Activated CD4-positive, alpha-beta memory T cell treated with anti-CD3 and anti-CD28 coated beads for 36 hours (primary cell): ENCODE measurements at regions of chr3 and their contacts with region 1.

Region 1: GRCh38 chr3:33113772-33114621 is at the start of gene CRTAP:
- DNase-seq: peak; percentile 91
- H3K4me3 Mint-ChIP-seq: peak within 1 kb of the TSS; percentile 80
- H3K27ac Mint-ChIP-seq: peak within 1 kb of the TSS; percentile 73
- H3K4me1 Mint-ChIP-seq: peaks cover 59% of the 10 kb centered on the region
- H3K27me3 Mint-ChIP-seq: no peaks in the 10 kb centered on the region
- total RNA-seq, gene CRTAP: 57.6 to 60.0 TPM

Region 2: DNA sequence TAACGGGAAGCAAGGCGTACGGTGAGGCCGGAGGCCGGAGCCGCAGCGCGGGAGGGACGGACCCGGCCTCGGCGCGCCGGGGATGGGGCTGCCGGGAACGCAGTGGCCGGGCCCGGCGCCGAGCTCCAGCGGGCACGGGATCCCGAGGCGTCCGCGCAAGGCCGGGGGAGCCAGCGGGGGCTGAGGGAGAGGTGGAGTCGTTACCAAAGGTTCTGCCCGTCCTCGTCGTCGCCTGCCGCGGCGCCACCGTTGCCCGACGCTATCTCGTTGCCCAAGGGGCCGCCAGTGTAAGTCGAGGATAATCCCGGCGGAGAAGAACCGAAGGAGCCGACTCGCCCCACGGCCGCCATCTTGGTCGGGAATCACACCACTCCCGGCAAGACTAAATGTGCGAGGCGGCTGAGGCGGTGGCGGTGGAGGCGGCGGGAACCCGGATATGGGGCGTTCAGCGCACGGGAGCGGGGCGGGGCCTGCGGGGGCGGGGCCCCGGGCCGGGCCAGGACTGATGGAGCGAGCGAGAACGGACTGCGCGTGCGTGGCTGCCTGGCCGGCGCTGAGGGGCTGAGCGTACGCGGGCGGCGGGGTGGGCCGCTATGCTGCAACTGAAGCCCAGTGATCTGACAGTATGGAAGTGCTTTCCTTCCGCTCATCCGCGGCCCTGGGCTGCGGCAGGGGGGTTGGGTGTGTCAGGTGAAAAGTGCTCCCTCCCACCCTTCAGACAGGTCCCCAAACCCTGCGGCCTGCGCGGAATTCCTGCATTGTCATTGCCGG is 543.4 kb before region 1 on chr3 and contains the start of gene DYNC1LI1:
- CTCF ChIA-PET with region 1: no interaction called
- POLR2A ChIA-PET with region 1: no interaction called
- intact Hi-C with region 1: loop called (anchors 2 kb)
- DNase-seq: peak; percentile 96
- H3K4me3 Mint-ChIP-seq: peak within 1 kb of the TSS; percentile 89
- H3K27ac Mint-ChIP-seq: peak within 1 kb of the TSS; percentile 90
- H3K4me1 Mint-ChIP-seq: peaks cover 27% of the 10 kb centered on the region
- H3K27me3 Mint-ChIP-seq: no peaks in the 10 kb centered on the region
- total RNA-seq, gene DYNC1LI1: 35.2 to 36.3 TPM

Region 3: DNA sequence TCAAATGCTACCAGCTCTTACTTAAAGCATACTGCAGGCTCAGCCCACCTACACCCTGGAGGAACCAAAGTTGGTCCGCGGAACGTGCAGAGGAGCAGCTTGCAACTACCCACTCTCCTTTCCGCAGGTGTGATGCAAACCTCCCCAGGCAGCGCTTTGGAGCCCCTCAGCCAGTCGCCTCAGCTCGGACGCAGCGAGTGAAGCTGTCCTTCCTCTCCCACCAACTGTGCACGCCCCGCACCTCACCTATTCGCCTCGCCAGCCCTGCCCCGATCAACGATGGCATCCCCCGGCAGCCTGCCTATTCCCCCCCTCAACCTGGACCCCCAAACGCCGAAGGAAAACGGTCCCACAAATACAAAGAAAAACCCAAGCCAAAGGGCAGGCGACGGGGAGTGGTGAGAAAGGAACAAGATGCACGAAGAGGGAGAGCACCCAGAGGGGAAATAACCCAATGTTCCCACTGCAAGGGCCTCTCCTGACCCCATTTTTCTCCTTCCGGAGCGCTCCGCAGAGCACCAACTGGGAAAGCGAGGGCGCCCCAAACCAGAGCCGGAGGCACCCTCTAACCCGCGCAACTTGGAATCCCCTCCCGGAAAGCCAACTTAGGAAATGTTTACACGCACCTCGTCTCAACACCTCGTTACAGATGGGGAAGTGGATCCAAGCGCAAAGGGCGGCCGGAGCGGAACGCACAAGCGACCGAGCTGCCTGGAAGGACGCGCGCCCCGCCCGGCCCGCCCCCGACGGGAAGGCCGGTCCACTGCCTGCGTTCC is 17.7 kb before region 1 on chr3:
- CTCF ChIA-PET with region 1: interaction called, 3 read pairs
- POLR2A ChIA-PET with region 1: interaction called, 8 read pairs
- intact Hi-C with region 1: loop called (anchors 1 kb)
- DNase-seq: peak; percentile 60
- H3K4me3 Mint-ChIP-seq: peak overlapping the region; percentile 97
- H3K27ac Mint-ChIP-seq: peak overlapping the region; percentile 85
- H3K4me1 Mint-ChIP-seq: peaks cover 43% of the 10 kb centered on the region
- H3K27me3 Mint-ChIP-seq: no peaks in the 10 kb centered on the region

Region 4: DNA sequence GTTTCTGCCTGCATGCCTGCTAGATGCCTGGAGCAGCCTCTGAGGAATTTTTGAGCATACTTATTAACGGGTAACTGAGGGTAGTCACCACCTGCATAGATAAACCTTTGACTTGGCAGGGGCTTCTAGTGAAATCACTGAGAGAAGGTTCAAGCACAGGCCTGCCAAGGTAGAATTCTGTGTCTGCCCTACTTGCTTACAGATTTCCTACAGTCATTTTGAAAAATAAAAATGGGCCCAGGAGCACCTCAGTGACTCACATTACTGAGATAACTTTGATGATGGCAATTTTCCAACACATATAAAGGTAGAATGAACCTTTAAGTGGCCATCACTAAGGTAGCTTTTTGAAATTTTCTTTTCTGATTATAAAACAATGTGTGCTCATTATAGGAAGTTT is 10.6 kb after region 1 on chr3:
- CTCF ChIA-PET with region 1: interaction called, 4 read pairs
- POLR2A ChIA-PET with region 1: no interaction called
- intact Hi-C with region 1: loop called (anchors 1 kb)
- DNase-seq: peak; percentile 14
- H3K4me3 Mint-ChIP-seq: no peak overlapping the region
- H3K27ac Mint-ChIP-seq: peak overlapping the region; percentile 44
- H3K4me1 Mint-ChIP-seq: peaks cover 16% of the 10 kb centered on the region
- H3K27me3 Mint-ChIP-seq: no peaks in the 10 kb centered on the region

Region 5: GRCh38 chr3:33131331-33132018 is 17.5 kb after region 1 on chr3:
- CTCF ChIA-PET with region 1: interaction called, 53 read pairs
- POLR2A ChIA-PET with region 1: no interaction called
- intact Hi-C with region 1: no loop called
- DNase-seq: peak; percentile 32
- H3K4me3 Mint-ChIP-seq: no peak overlapping the region
- H3K27ac Mint-ChIP-seq: no peak overlapping the region
- H3K4me1 Mint-ChIP-seq: peaks cover 9% of the 10 kb centered on the region
- H3K27me3 Mint-ChIP-seq: no peaks in the 10 kb centered on the region

Region 6: GRCh38 chr3:33798411-33799201 is 684.6 kb after region 1 on chr3 and contains the start of gene PDCD6IP:
- CTCF ChIA-PET with region 1: no interaction called
- POLR2A ChIA-PET with region 1: interaction called, 3 read pairs
- intact Hi-C with region 1: loop called (anchors 10 kb)
- DNase-seq: peak; percentile 94
- H3K4me3 Mint-ChIP-seq: peak within 1 kb of the TSS; percentile 95
- H3K27ac Mint-ChIP-seq: peak within 1 kb of the TSS; percentile 89
- H3K4me1 Mint-ChIP-seq: peaks cover 56% of the 10 kb centered on the region
- H3K27me3 Mint-ChIP-seq: no peaks in the 10 kb centered on the region
- total RNA-seq, gene PDCD6IP: 163 to 168 TPM